ENCODE measurements at regions of chr1 and their contacts with region 1.

Region 1: GRCh38 chr1:167409183-167409582 is 109.1 kb downstream of the CD247 start:
- DNase-seq: no peak
- H3K4me3 ChIP-seq: no peak overlapping the region
- H3K27ac ChIP-seq: no peak overlapping the region
- H3K4me1 ChIP-seq: no peaks in the 10 kb centered on the region
- H3K27me3 ChIP-seq: no peaks in the 10 kb centered on the region
- CTCF ChIP-seq: peak in 2 of 3 experiments; percentile 48 to 57; a peak in 3 of 4 replicates
- EP300 ChIP-seq: no peak
- POLR2A ChIP-seq: no peak
- RAD21 ChIP-seq: peak; percentile 66 to 75

Region 2: GRCh38 chr1:167152192-167152876 is 256.8 kb before region 1 on chr1:
- CTCF ChIA-PET with region 1: no interaction called
- POLR2A ChIA-PET with region 1: no interaction called
- DNase-seq: no peak
- H3K4me3 ChIP-seq: no peak overlapping the region
- H3K27ac ChIP-seq: no peak overlapping the region
- H3K4me1 ChIP-seq: peaks cover 0 to 11% (median 3%) of the 10 kb centered on the region in 4 experiments; a peak in 5 of 7 replicates
- H3K27me3 ChIP-seq: peaks cover 0 to 2% (median 0%) of the 10 kb centered on the region in 4 experiments; a peak in 1 of 7 replicates
- CTCF ChIP-seq: no peak
- EP300 ChIP-seq: no peak
- POLR2A ChIP-seq: no peak
- RAD21 ChIP-seq: no peak

Region 3: GRCh38 chr1:167430134-167430856 is 21.1 kb after region 1 on chr1:
- CTCF ChIA-PET with region 1: interaction called, 11 read pairs
- POLR2A ChIA-PET with region 1: interaction called, 3 read pairs
- DNase-seq: peak; percentile 61 to 68
- H3K4me3 ChIP-seq: no peak overlapping the region
- H3K27ac ChIP-seq: no peak overlapping the region
- H3K4me1 ChIP-seq: peaks cover 20 to 47% (median 28%) of the 10 kb centered on the region in 4 experiments
- H3K27me3 ChIP-seq: peaks cover 0 to under 1% (median 0%) of the 10 kb centered on the region in 4 experiments; a peak in 1 of 7 replicates
- CTCF ChIP-seq: no peak
- EP300 ChIP-seq: 0 out of 3 replicates have a peak, but pooled peaks of 1 of the 2 experiments have one; percentile 21
- POLR2A ChIP-seq: no peak
- RAD21 ChIP-seq: no peak

Region 4: GRCh38 chr1:167456524-167456923 is 47.3 kb after region 1 on chr1:
- CTCF ChIA-PET with region 1: no interaction called
- POLR2A ChIA-PET with region 1: no interaction called
- DNase-seq: no peak
- H3K4me3 ChIP-seq: peak overlapping the region in 1 of 4 experiments; percentile 3; a peak in 1 of 8 replicates
- H3K27ac ChIP-seq: no peak overlapping the region
- H3K4me1 ChIP-seq: peaks cover 0 to 15% (median 4%) of the 10 kb centered on the region in 4 experiments; a peak in 6 of 7 replicates
- H3K27me3 ChIP-seq: peaks cover 0 to 28% (median 24%) of the 10 kb centered on the region in 4 experiments; a peak in 6 of 7 replicates
- CTCF ChIP-seq: no peak
- EP300 ChIP-seq: no peak
- POLR2A ChIP-seq: no peak
- RAD21 ChIP-seq: no peak